ENCODE measurements at regions of chr13 and their contacts with region 1.

Region 1: GRCh38 chr13:40094056-40094455 is 438.6 kb downstream of the COG6 start:
- DNase-seq: no peak
- ATAC-seq: no peak

Region 2: DNA sequence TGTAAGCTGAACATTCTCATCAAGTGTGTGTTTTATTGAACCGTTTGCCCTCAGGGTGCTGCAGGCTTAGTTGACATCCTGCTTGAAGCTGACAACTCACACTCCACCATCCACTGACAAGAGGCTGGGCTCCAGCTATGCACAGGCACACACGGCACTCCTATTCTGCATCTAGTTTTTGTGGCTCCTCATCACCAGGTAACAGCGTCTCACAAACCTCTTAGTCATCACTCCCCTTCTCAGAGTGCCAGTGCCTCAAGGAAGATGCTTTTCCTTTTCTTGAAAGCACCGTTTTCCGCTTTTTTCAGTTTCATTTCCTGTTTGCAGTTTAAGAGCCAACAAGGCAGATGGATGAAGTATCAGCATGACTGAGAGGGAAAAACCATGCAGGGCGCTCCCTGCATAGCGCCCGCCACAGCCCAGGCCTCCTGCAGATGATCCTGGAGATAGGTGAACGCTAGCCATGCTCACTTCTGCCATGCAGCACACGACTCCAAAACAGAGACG is 52.6 kb after region 1 on chr13:
- intact Hi-C with region 1: loop called (anchors 2 kb)
- DNase-seq: no peak
- ATAC-seq: no peak